ENCODE measurements at regions of chr2 and their contacts with region 1.

Region 1: GRCh38 chr2:212777020-212777491 is 238.5 kb upstream of the ERBB4 start:
- DNase-seq: peak; percentile 52
- H3K4me3 ChIP-seq: no peak overlapping the region
- H3K27ac ChIP-seq: no peak overlapping the region
- H3K4me1 ChIP-seq: peaks cover 7% of the 10 kb centered on the region
- H3K27me3 ChIP-seq: no peaks in the 10 kb centered on the region
- CTCF ChIP-seq: peak; percentile 60 to 69

Region 2: GRCh38 chr2:212686285-212686895 is 90.7 kb before region 1 on chr2:
- CTCF ChIA-PET with region 1: no interaction called
- dilution Hi-C with region 1: no loop called
- in situ Hi-C with region 1: no loop called
- intact Hi-C with region 1: loop called (anchors 1 kb)
- DNase-seq: peak; percentile 50
- H3K4me3 ChIP-seq: no peak overlapping the region
- H3K27ac ChIP-seq: no peak overlapping the region
- H3K4me1 ChIP-seq: no peaks in the 10 kb centered on the region
- H3K27me3 ChIP-seq: no peaks in the 10 kb centered on the region
- CTCF ChIP-seq: peak; percentile 75 to 83

Region 3: GRCh38 chr2:212843409-212844199 is 66.5 kb after region 1 on chr2:
- CTCF ChIA-PET with region 1: no interaction called
- dilution Hi-C with region 1: no loop called
- in situ Hi-C with region 1: no loop called
- intact Hi-C with region 1: loop called (anchors 2 kb)
- DNase-seq: peak; percentile 94
- H3K4me3 ChIP-seq: peak overlapping the region in 1 of 3 experiments; percentile 15
- H3K27ac ChIP-seq: peak overlapping the region; percentile 100
- H3K4me1 ChIP-seq: peaks cover 42% of the 10 kb centered on the region
- H3K27me3 ChIP-seq: no peaks in the 10 kb centered on the region
- CTCF ChIP-seq: no peak

Region 4: GRCh38 chr2:212953170-212953569 is 176.1 kb after region 1 on chr2:
- CTCF ChIA-PET with region 1: no interaction called
- dilution Hi-C with region 1: no loop called
- in situ Hi-C with region 1: no loop called
- intact Hi-C with region 1: loop called (anchors 10 kb)
- DNase-seq: no peak
- H3K4me3 ChIP-seq: no peak overlapping the region
- H3K27ac ChIP-seq: no peak overlapping the region
- H3K4me1 ChIP-seq: peaks cover 13% of the 10 kb centered on the region
- H3K27me3 ChIP-seq: no peaks in the 10 kb centered on the region
- CTCF ChIP-seq: no peak

Region 5: DNA sequence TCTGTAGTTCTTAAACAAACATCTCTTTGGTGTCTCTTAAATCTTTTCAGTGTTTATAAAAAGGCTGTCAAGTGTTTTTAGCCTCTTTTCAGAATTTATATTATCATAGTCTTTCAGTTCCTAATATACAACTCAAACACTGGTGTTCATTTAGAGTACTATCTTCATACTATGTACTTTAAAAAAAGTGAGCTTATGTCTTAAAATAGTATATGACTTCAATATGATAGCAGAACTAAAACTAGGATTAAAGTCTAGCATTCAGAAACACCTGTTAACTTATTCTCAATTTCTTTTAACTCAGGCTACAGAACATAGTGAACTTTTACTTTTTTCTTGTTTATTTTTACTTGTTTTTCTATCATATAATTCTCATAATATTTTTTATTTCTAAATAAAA is 389.1 kb after region 1 on chr2:
- CTCF ChIA-PET with region 1: no interaction called
- dilution Hi-C with region 1: no loop called
- in situ Hi-C with region 1: loop called in 1 of 2 experiments (anchors 10 kb)
- intact Hi-C with region 1: no loop called
- DNase-seq: no peak
- H3K4me3 ChIP-seq: no peak overlapping the region
- H3K27ac ChIP-seq: no peak overlapping the region
- H3K4me1 ChIP-seq: peaks cover 12% of the 10 kb centered on the region
- H3K27me3 ChIP-seq: no peaks in the 10 kb centered on the region
- CTCF ChIP-seq: no peak

Measured in mammary epithelial cell (primary cell).